ENCODE measurements at regions of chr2 and their contacts with region 1.

Region 1: DNA sequence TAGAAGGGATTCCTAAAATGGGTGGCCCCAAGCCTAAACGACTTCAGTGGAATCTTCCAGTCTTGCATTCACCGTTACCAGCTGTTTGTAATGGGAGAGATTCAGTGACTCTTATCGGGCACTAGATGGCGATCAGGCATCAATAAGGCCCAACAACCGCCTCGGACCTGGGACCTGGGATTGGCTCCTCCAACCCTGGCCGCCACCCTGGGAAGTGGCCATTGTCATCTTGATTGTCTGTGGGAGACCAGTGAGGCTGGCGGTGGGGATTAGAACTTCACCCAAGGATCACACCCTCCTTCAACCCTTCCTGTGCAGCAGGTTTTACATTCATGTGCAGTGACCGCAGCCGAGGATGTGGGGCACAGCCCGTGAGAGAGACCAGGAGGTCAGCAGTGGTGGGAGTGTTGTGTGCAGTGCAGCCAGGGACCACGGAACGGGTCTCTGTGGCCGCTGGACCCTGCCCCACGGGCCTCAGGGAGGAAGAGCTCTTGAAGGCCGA is 85.3 kb downstream of the SPP2 start:
- DNase-seq: peak; percentile 73
- H3K4me3 ChIP-seq: no peak overlapping the region
- H3K27ac ChIP-seq: no peak overlapping the region
- H3K4me1 ChIP-seq: peaks cover 16% of the 10 kb centered on the region
- H3K27me3 ChIP-seq: peaks cover 3 to 9% of the 10 kb centered on the region in 2 experiments
- CTCF ChIP-seq: peak; percentile 68 to 79
- POLR2A ChIP-seq: no peak

Region 2: DNA sequence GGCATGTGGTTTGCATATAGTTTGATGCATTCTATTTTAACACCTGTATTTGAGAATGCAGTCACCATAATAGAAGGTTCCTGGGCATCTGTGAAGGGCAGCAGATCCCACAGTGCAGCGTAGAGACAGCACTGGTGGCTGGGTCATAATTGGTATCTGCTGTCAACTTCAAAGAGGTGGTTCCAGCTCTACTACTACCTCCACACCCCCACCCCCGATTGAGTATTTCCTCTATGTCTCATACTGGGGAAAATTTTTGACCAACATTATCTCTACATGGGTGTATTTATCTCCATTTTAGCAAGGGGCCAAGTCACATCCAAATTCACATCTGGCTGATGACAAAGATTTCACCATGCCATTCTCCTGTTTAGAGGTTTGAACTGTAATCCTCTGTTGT is 175.6 kb before region 1 on chr2:
- CTCF ChIA-PET with region 1: no interaction called
- POLR2A ChIA-PET with region 1: no interaction called
- dilution Hi-C with region 1: no loop called
- intact Hi-C with region 1: no loop called
- DNase-seq: no peak
- H3K4me3 ChIP-seq: no peak overlapping the region
- H3K27ac ChIP-seq: no peak overlapping the region
- H3K4me1 ChIP-seq: no peaks in the 10 kb centered on the region
- H3K27me3 ChIP-seq: peaks cover 0 to 2% of the 10 kb centered on the region in 2 experiments
- CTCF ChIP-seq: no peak
- POLR2A ChIP-seq: no peak

Region 3: GRCh38 chr2:233976690-233977294 is 159.0 kb before region 1 on chr2:
- CTCF ChIA-PET with region 1: interaction called, 6 read pairs
- POLR2A ChIA-PET with region 1: no interaction called
- dilution Hi-C with region 1: no loop called
- intact Hi-C with region 1: loop called (anchors 1 kb)
- DNase-seq: peak; percentile 57
- H3K4me3 ChIP-seq: no peak overlapping the region
- H3K27ac ChIP-seq: no peak overlapping the region
- H3K4me1 ChIP-seq: peaks cover 13% of the 10 kb centered on the region
- H3K27me3 ChIP-seq: peaks cover 0 to 3% of the 10 kb centered on the region in 2 experiments
- CTCF ChIP-seq: peak; percentile 4 to 22
- POLR2A ChIP-seq: no peak

Region 4: GRCh38 chr2:234169187-234169570 is 33.4 kb after region 1 on chr2:
- CTCF ChIA-PET with region 1: interaction called, 15 read pairs
- POLR2A ChIA-PET with region 1: no interaction called
- dilution Hi-C with region 1: no loop called
- intact Hi-C with region 1: no loop called
- DNase-seq: peak; percentile 80
- H3K4me3 ChIP-seq: no peak overlapping the region
- H3K27ac ChIP-seq: no peak overlapping the region
- H3K4me1 ChIP-seq: peaks cover 2% of the 10 kb centered on the region
- H3K27me3 ChIP-seq: no peaks in the 10 kb centered on the region
- CTCF ChIP-seq: no peak
- POLR2A ChIP-seq: no peak

Region 5: DNA sequence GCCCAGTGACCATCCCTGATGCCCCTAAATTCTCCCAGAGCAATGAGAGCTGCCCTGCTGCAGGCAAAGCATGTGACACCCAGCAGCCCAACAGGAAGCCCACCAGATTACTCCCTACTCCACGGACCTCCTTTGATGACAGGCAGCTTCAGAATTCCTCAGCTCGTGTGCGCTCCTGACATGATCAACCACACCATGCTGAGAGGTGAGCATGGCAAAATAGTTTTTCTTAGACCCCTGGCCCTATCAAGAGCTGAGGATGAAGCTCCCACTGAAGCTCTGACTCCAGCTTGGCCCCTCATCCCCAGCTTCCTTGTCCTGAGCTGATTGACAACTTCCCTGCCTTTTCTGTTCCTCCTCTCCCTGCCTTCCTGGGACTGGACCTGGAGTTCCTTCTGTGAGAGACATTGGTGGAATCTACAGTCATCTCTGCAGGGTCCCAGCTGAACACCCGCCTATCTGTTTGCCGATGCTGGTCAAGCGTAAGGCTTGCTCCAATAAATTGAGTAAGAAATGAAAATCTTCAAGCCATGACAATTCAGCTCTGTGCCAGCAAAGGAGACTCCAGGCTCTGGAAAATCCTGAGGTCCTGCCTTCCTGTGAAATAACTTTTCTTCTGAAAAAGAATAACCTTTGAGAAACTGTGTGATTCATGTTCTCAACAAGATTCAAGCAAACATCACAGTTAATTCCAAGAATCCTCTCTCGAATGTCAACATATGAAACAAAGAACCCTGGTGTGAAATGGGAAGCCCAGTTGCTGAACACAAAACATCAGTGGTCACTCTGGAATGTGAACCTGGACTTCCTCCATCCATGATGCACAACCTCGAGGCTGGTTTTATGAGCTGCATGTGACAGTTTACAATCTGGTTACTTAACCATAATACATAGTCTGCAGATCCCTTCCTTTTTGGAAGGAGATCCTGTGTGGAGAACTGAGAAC is 115.8 kb after region 1 on chr2:
- CTCF ChIA-PET with region 1: interaction called, 38 read pairs
- POLR2A ChIA-PET with region 1: no interaction called
- dilution Hi-C with region 1: no loop called
- intact Hi-C with region 1: no loop called
- DNase-seq: peak; percentile 91
- H3K4me3 ChIP-seq: no peak overlapping the region
- H3K27ac ChIP-seq: peak overlapping the region; percentile 82
- H3K4me1 ChIP-seq: peaks cover 29% of the 10 kb centered on the region
- H3K27me3 ChIP-seq: no peaks in the 10 kb centered on the region
- CTCF ChIP-seq: no peak
- POLR2A ChIP-seq: no peak

Region 6: DNA sequence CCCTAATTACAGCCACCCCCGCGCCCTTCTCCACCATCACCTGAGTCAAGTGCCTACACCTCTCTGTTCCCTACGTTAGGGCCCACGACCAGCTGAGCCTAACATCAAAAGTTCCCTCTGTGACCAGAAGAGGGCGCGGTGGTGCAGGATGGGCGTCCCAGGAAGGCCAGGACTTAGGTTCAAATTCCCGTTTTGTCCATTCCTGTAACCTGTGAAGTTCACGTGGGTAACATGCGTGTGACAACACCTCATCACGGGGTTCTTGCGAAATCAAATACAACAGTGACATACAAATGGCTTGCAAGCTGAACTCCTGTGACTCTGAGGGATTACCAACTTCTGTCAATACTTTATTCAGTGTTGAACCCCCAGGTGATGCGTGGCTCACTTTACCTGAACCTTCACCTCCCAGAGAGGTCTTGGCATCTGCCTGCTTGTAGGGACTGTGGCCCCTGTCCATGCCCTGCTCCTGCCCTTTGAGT is 153.2 kb after region 1 on chr2:
- CTCF ChIA-PET with region 1: interaction called, 33 read pairs
- POLR2A ChIA-PET with region 1: no interaction called
- dilution Hi-C with region 1: no loop called
- intact Hi-C with region 1: loop called (anchors 1 kb)
- DNase-seq: peak; percentile 65
- H3K4me3 ChIP-seq: no peak overlapping the region
- H3K27ac ChIP-seq: no peak overlapping the region
- H3K4me1 ChIP-seq: peaks cover 37% of the 10 kb centered on the region
- H3K27me3 ChIP-seq: no peaks in the 10 kb centered on the region
- CTCF ChIP-seq: peak; percentile 75 to 88
- POLR2A ChIP-seq: no peak

Region 7: DNA sequence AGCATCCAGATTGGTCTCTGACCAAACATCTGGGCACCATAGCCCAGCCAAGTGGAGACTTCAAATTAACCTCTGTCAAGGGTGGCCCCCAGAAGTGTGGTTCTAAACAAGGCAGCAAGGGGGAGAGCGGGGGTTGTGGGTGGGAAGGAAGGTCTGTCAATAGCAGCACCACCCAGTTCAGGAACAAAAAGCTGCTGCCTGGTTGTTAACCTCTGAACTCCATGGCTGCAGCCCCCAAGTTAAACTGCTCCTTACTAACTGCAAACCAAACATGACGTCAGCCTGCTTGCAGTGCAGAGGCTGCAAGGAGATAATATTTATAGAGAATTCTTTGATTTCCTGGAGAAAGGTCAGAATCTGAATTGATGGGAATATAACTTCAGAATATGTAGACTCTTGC is 284.6 kb after region 1 on chr2:
- CTCF ChIA-PET with region 1: interaction called, 6 read pairs
- POLR2A ChIA-PET with region 1: no interaction called
- dilution Hi-C with region 1: no loop called
- intact Hi-C with region 1: loop called (anchors 1 kb)
- DNase-seq: peak; percentile 72
- H3K4me3 ChIP-seq: no peak overlapping the region
- H3K27ac ChIP-seq: no peak overlapping the region
- H3K4me1 ChIP-seq: peaks cover 20% of the 10 kb centered on the region
- H3K27me3 ChIP-seq: no peaks in the 10 kb centered on the region
- CTCF ChIP-seq: no peak
- POLR2A ChIP-seq: no peak

Region 8: DNA sequence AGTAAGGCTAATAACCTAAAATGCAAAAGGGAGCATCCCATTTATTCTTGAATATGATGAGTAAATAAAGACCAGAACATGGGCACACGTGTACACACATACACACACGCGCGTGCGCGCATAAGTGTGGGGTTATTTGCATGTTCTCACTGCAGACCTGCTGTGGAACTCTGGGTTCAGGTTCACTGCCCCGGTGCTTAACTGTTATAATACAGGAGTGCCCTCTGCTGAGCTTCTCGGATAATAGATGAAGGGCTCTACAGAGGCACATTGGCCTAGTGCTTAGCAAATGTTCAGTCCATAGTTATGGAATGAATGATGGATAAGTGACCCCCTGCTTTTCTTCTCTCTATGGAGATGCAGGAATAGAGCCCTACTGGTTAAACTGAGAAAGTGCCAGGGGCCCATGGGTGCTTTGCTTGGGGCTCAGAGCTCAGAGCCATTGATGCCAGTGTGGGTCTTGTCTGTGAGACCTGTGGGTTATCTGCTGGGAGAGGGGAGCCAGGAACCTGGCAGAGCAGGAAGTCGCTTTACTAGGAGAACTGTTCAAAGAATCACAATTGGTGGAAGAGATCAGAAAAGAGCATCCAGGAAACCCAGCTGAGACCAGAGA is 364.7 kb after region 1 on chr2:
- CTCF ChIA-PET with region 1: interaction called, 78 read pairs
- POLR2A ChIA-PET with region 1: no interaction called
- dilution Hi-C with region 1: no loop called
- intact Hi-C with region 1: loop called (anchors 1 kb)
- DNase-seq: peak; percentile 61
- H3K4me3 ChIP-seq: no peak overlapping the region
- H3K27ac ChIP-seq: no peak overlapping the region
- H3K4me1 ChIP-seq: peaks cover 3% of the 10 kb centered on the region
- H3K27me3 ChIP-seq: peaks cover 0 to 2% of the 10 kb centered on the region in 2 experiments
- CTCF ChIP-seq: peak; percentile 51 to 58
- POLR2A ChIP-seq: no peak

Measured in endothelial cell of umbilical vein (primary cell).